Caco-2 (cell line): ENCODE measurements at regions of chr2 and their contacts with region 1.

Region 1: GRCh38 chr2:30217644-30218337 is 13.5 kb upstream of the LBH start:
- DNase-seq: peak; percentile 95 to 97
- H3K4me3 ChIP-seq: peak overlapping the region; percentile 17
- H3K4me3 Mint-ChIP-seq: peak overlapping the region; percentile 69
- H3K27ac Mint-ChIP-seq: peak overlapping the region; percentile 97
- H3K4me1 ChIP-seq: peaks cover 48% of the 10 kb centered on the region
- H3K4me1 Mint-ChIP-seq: peaks cover 63% of the 10 kb centered on the region
- H3K27me3 ChIP-seq: no peaks in the 10 kb centered on the region
- H3K27me3 Mint-ChIP-seq: no peaks in the 10 kb centered on the region
- CTCF ChIP-seq: no peak

Region 2: DNA sequence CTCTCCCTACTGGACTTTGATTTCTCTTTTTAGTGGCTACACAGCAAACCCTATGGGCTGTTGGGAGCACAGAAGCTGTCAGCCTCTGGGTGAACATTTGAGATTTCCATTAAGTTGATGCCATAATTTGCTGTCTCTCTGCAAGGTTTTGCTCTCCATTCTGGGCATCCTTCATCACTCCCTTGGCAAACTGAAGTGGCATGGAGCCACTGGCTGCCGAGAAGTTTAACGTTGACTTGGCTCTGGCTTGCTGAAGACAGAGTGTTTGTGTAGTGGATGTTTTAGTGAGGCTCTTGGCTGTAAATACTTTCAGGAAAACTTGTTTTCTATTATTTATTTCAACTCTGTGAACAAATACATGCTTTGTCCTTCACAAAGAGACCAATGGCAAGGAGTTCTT is 387.9 kb before region 1 on chr2:
- CTCF ChIA-PET with region 1: no interaction called
- POLR2A ChIA-PET with region 1: no interaction called
- intact Hi-C with region 1: no loop called
- DNase-seq: no peak
- H3K4me3 ChIP-seq: no peak overlapping the region
- H3K4me3 Mint-ChIP-seq: no peak overlapping the region
- H3K27ac Mint-ChIP-seq: no peak overlapping the region
- H3K4me1 ChIP-seq: no peaks in the 10 kb centered on the region
- H3K4me1 Mint-ChIP-seq: no peaks in the 10 kb centered on the region
- H3K27me3 ChIP-seq: no peaks in the 10 kb centered on the region; the same call in 1 of the 2 replicates
- H3K27me3 Mint-ChIP-seq: peaks cover 17% of the 10 kb centered on the region
- CTCF ChIP-seq: no peak

Region 3: DNA sequence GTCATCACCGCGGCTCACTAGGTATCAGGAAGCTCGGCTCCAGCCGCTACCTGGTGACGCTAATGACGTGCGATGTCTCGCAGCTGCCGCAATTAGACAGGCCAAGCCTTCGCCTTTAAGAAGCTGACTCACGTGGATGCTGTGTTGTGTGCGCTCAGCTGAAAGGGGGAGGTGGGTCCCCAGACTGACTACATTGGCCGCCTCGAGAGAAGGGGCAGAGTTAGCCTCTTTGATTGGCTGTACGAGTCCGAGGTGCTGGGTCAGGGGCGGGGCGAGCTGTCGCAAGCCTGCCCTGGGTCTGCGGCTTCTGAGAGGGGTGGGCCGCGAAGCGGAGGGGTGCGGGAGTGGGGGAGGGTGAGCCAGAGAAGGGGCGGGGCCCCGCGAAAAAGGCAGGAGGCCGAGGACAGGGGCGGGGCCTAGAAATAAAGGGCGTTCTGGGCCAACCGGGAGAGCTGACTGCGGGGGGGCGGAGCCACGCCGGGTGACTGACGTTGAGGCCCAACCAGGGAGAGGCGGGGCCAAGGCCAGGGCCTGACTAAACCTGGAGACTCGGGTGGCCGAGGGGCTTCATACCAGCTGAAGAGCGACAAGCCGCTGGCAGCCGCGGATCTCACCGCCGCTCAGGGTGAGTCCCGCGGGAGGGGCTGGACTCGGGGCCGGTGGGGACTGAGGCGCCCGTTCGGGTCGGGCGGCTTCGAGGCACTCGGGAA is 71.2 kb before region 1 on chr2 and contains the start of gene YPEL5:
- CTCF ChIA-PET with region 1: no interaction called
- POLR2A ChIA-PET with region 1: interaction called, 11 read pairs
- intact Hi-C with region 1: loop called (anchors 2 kb)
- DNase-seq: peak; percentile 99
- H3K4me3 ChIP-seq: peak within 1 kb of the TSS; percentile 69
- H3K4me3 Mint-ChIP-seq: peak within 1 kb of the TSS; percentile 80
- H3K27ac Mint-ChIP-seq: peak within 1 kb of the TSS; percentile 89
- H3K4me1 ChIP-seq: peaks cover 38% of the 10 kb centered on the region
- H3K4me1 Mint-ChIP-seq: peaks cover 29% of the 10 kb centered on the region
- H3K27me3 ChIP-seq: no peaks in the 10 kb centered on the region
- H3K27me3 Mint-ChIP-seq: peaks cover 4% of the 10 kb centered on the region
- CTCF ChIP-seq: no peak
- total RNA-seq, gene YPEL5: 43.6 and 50.9 TPM in 2 replicates

Region 4: GRCh38 chr2:30231212-30231995 is 13.6 kb after region 1 on chr2 and contains the start of gene LBH:
- CTCF ChIA-PET with region 1: interaction called, 27 read pairs
- POLR2A ChIA-PET with region 1: interaction called, 41 read pairs
- intact Hi-C with region 1: loop called (anchors 1 kb)
- DNase-seq: peak; percentile 87 to 91
- H3K4me3 ChIP-seq: peak within 1 kb of the TSS; percentile 60
- H3K4me3 Mint-ChIP-seq: peak within 1 kb of the TSS; percentile 94
- H3K27ac Mint-ChIP-seq: peak within 1 kb of the TSS; percentile 67
- H3K4me1 ChIP-seq: peaks cover 28% of the 10 kb centered on the region
- H3K4me1 Mint-ChIP-seq: peaks cover 30% of the 10 kb centered on the region
- H3K27me3 ChIP-seq: no peaks in the 10 kb centered on the region
- H3K27me3 Mint-ChIP-seq: no peaks in the 10 kb centered on the region
- CTCF ChIP-seq: peak in 1 of 2 experiments; percentile 10
- total RNA-seq, gene LBH: 126 and 159 TPM in 2 replicates

Region 5: GRCh38 chr2:30239308-30239985 is 21.7 kb after region 1 on chr2:
- CTCF ChIA-PET with region 1: interaction called, 27 read pairs
- POLR2A ChIA-PET with region 1: interaction called, 7 read pairs
- intact Hi-C with region 1: no loop called
- DNase-seq: peak; percentile 79 to 86
- H3K4me3 ChIP-seq: no peak overlapping the region
- H3K4me3 Mint-ChIP-seq: no peak overlapping the region
- H3K27ac Mint-ChIP-seq: peak overlapping the region; percentile 48
- H3K4me1 ChIP-seq: peaks cover 7% of the 10 kb centered on the region; the same call in 1 of the 2 replicates
- H3K4me1 Mint-ChIP-seq: peaks cover 11% of the 10 kb centered on the region
- H3K27me3 ChIP-seq: no peaks in the 10 kb centered on the region
- H3K27me3 Mint-ChIP-seq: no peaks in the 10 kb centered on the region
- CTCF ChIP-seq: peak; percentile 79 to 95

Region 6: GRCh38 chr2:30252723-30253701 is 35.2 kb after region 1 on chr2:
- CTCF ChIA-PET with region 1: no interaction called
- POLR2A ChIA-PET with region 1: interaction called, 8 read pairs
- intact Hi-C with region 1: loop called (anchors 1 kb)
- DNase-seq: peak; percentile 81 to 84
- H3K4me3 ChIP-seq: no peak overlapping the region
- H3K4me3 Mint-ChIP-seq: peak overlapping the region; percentile 64
- H3K27ac Mint-ChIP-seq: peak overlapping the region; percentile 82
- H3K4me1 ChIP-seq: peaks cover 46% of the 10 kb centered on the region
- H3K4me1 Mint-ChIP-seq: peaks cover 40% of the 10 kb centered on the region
- H3K27me3 ChIP-seq: no peaks in the 10 kb centered on the region
- H3K27me3 Mint-ChIP-seq: no peaks in the 10 kb centered on the region
- CTCF ChIP-seq: no peak

Region 7: DNA sequence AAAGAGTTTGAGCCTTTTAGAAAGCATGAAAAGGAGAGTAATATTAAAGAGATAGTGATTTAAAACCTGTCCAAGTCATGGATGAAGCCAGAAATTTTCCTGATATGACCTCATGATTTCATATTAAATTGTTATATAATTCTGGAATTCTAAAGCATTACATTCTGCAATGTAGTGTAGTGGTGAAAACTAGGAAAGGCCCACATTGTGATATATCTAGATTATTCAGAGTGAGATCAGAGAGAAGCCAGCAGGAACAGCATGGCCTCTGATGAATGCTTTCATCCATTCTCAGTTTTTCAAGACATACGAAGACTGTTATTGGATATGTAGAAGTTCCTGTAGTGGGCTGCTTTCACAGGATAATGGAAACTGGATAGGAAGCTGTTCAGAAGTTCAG is 328.1 kb after region 1 on chr2:
- CTCF ChIA-PET with region 1: no interaction called
- POLR2A ChIA-PET with region 1: interaction called, 5 read pairs
- intact Hi-C with region 1: loop called (anchors 5 kb)
- DNase-seq: no peak
- H3K4me3 ChIP-seq: no peak overlapping the region
- H3K4me3 Mint-ChIP-seq: no peak overlapping the region
- H3K27ac Mint-ChIP-seq: no peak overlapping the region
- H3K4me1 ChIP-seq: peaks cover 44% of the 10 kb centered on the region
- H3K4me1 Mint-ChIP-seq: peaks cover 51% of the 10 kb centered on the region
- H3K27me3 ChIP-seq: no peaks in the 10 kb centered on the region
- H3K27me3 Mint-ChIP-seq: no peaks in the 10 kb centered on the region
- CTCF ChIP-seq: no peak